BJ (cell line): ENCODE measurements at regions of chr16 and their contacts with region 1.

Region 1: GRCh38 chr16:2500918-2501750 is 12.6 kb upstream of the ATP6V0C start:
- DNase-seq: no peak
- H3K4me3 ChIP-seq: no peak overlapping the region
- H3K27me3 ChIP-seq: no peaks in the 10 kb centered on the region
- CTCF ChIP-seq: peak; percentile 98

Region 2: DNA sequence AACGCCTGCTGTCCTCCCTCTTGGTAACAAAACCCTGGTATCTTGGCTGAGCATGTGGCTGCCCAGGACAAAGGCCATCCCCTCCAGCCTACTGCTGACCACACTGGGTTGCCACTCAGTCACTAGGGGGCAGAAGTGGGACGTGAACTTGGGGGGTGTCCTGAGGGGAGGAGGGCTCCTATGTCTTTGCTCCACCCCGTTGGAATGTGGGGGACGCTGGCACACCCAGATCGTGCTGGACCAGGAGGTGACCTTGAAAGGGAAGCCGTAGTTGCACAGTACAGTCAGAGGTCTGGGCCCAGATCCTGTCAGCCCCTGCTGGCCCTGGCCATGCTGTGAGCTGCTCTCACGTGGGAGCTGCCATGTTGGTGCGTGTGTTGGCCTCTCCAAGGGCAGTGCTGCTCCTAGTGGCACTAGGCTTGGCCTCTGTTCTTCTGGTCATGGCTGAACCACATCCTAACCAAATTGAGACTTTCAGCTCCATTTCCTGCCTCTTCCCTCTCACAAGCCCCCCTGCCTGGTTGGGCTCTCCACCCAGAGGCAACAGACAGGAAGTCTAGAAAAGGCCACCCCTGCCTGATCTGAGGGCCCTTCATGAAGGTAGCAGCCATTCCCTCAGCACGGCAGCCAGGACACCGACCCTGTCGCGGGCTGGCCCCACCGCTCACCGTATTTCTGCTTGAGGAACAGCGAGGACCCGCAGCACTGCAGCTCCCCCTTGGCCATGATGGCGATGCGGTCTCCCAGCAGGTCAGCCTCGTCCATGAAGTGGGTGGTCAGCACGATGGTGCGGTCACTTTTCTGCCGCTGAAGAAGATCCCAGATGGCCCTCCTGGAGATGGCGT is 204.3 kb before region 1 on chr16:
- CTCF ChIA-PET with region 1: interaction called, 10 read pairs
- POLR2A ChIA-PET with region 1: no interaction called
- DNase-seq: no peak
- H3K4me3 ChIP-seq: no peak overlapping the region
- H3K27me3 ChIP-seq: no peaks in the 10 kb centered on the region
- CTCF ChIP-seq: peak; percentile 52

Region 3: DNA sequence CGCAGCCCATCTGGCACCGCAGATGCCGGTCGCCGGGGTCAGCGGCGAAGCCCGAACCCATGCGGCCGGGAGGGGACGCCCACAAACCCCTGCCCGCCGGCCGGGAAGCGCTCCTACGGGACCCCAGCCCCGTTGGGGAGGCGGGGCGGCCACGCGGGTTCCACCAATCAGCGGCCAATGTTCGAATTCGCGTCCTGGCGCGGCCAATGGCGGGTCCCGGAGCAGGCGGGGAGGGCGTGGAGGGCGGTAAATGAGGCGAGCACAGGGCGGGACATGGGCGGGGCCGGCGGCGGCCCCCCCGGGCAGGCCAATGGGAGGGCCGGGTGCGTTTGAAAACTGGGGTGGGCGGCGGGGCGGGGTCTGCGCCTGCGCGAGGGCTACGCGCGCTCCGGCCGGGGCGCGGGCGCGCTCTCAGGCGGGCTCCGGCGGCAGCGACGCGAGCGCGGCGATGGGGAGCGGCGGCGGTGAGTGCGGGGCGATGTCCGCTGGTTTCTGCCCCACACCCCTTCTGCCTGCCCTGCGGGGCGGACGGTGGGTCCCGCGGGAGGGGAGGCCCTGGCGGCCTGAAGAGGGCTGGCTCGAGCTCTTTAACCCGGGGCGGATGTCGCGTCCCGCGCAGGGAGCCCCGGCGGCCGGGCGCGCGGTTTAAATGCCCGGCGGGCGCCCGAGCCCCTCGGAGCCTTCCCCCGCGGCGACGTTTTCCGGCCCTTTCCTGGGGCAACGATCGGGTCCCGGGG is 71.9 kb before region 1 on chr16 and contains the start of gene CCNF:
- CTCF ChIA-PET with region 1: interaction called, 14 read pairs
- POLR2A ChIA-PET with region 1: no interaction called
- DNase-seq: peak; percentile 67
- H3K4me3 ChIP-seq: peak within 1 kb of the TSS; percentile 91
- H3K27me3 ChIP-seq: no peaks in the 10 kb centered on the region
- CTCF ChIP-seq: no peak
- polyA plus RNA-seq, gene CCNF: 4.5 and 7.1 TPM in 2 replicates

Region 4: DNA sequence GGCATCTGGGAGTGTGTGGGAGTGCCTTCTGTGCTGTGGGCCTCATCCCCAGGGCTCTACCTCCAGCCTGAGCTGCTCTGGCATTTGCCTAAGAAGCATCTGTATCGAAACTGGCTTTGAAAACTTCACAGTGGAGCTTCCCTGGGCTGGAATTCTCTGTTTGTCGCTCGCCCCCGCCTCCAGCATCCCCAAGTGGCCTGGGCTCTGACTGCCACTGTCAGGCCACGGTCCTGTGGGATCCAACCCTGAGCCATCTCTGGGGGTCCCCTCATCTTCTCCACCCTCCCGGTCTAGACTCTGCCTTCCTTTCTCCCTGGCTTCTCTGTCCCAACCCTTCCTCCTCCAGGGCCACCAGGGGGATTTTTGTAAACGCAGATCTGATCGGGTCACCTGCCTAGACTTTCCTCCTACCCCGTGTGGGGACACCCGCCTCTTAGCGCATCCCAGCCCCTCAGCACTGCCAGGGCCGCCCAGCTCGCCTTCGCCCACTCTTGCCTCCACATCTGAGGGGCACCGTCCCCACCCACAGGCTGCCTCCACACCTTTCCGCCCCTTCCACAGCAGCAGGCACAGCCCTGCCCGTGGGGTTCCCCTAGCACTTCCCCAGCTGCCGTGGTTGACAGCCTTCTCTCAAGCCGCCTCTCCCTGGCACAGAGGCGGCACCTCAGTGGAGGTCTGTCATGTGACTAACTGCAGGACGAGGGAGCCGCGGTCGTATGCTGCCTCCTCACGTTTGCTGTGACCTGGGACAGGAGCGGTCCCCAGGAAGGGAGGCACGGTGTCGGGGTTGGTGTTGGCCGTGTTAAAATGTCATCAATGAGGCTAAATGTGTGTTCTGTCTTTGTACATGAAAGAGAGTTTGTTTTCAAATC is 14.3 kb before region 1 on chr16:
- CTCF ChIA-PET with region 1: interaction called, 63 read pairs
- POLR2A ChIA-PET with region 1: no interaction called
- DNase-seq: no peak
- H3K4me3 ChIP-seq: no peak overlapping the region
- H3K27me3 ChIP-seq: no peaks in the 10 kb centered on the region
- CTCF ChIP-seq: 0 out of 2 replicates have a peak, but pooled peaks have one; percentile 10

Region 5: GRCh38 chr16:2512703-2513404 is 11.7 kb after region 1 on chr16:
- CTCF ChIA-PET with region 1: interaction called, 10 read pairs
- POLR2A ChIA-PET with region 1: no interaction called
- DNase-seq: no peak
- H3K4me3 ChIP-seq: peak overlapping the region; percentile 97
- H3K27me3 ChIP-seq: no peaks in the 10 kb centered on the region
- CTCF ChIP-seq: no peak